ENCODE measurements at regions of chr6 and their contacts with region 1.

Region 1: GRCh38 chr6:111361648-111362047 is 121.4 kb downstream of the REV3L start:
- DNase-seq: no peak
- H3K4me3 ChIP-seq: no peak overlapping the region
- H3K27ac ChIP-seq: no peak overlapping the region
- H3K4me1 ChIP-seq: peaks cover 0 to 8% (median 0%) of the 10 kb centered on the region in 4 donors
- H3K27me3 ChIP-seq: no peaks in the 10 kb centered on the region
- CTCF ChIP-seq: peak; percentile 44 to 57 (median 56)
- EP300 ChIP-seq: no peak
- POLR2A ChIP-seq: no peak

Region 2: DNA sequence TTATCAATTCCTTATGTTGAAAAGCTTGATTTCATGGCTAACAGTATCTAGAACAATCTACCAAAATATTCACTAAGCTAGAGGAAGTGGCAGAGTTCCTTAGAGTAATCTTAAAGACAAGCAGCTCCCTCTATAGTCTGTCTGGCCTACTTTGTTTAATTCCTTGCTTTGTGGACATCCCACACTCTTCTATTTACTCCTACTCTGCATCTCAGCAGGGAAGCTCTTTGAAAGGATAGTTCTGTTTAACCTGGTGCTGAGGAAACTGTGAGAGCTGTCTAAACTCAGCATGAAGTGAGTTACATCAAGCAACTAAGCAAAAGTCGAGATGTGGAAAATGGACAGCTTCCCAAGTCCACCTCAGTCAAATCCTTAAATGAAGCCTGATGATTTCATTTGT is 117.1 kb after region 1 on chr6:
- intact Hi-C with region 1: loop called (anchors 10 kb)
- DNase-seq: no peak
- H3K4me3 ChIP-seq: no peak overlapping the region
- H3K27ac ChIP-seq: peak overlapping the region; percentile 46 to 100 (median 99)
- H3K4me1 ChIP-seq: peaks cover 26 to 72% (median 63%) of the 10 kb centered on the region in 4 donors
- H3K27me3 ChIP-seq: no peaks in the 10 kb centered on the region
- CTCF ChIP-seq: peak; percentile 34 to 46 (median 42)
- EP300 ChIP-seq: no peak
- POLR2A ChIP-seq: no peak

Region 3: DNA sequence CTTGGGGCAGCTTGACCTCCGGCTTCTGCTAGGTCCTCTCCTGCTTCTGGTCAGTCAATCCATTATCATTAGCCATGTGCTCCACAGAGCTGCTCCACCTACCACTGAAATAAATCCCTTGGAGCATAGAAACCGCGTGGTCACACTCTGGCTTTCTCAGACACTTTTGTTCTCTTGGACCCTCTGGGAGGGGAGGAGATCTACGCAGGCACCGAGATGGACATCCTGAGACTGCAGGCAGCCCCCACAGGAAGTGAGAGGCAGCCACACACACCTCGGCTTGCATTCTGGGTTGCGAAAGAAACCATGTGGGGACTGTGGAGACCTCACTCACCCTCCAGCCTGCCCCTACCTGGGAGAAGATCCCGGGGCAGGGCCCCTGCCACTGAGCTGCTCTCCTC is 432.1 kb after region 1 on chr6:
- intact Hi-C with region 1: no loop called
- DNase-seq: no peak
- H3K4me3 ChIP-seq: no peak overlapping the region
- H3K27ac ChIP-seq: no peak overlapping the region
- H3K4me1 ChIP-seq: peaks cover 5 to 29% (median 17%) of the 10 kb centered on the region in 4 donors
- H3K27me3 ChIP-seq: no peaks in the 10 kb centered on the region
- CTCF ChIP-seq: no peak
- EP300 ChIP-seq: no peak
- POLR2A ChIP-seq: no peak